Mammary epithelial cell (primary cell): ENCODE measurements at regions of chr6 and their contacts with region 1.

Region 1: GRCh38 chr6:157667211-157668008 is 155.6 kb upstream of the SNX9 start:
- DNase-seq: peak; percentile 32
- H3K4me3 ChIP-seq: no peak overlapping the region
- H3K27ac ChIP-seq: no peak overlapping the region
- H3K4me1 ChIP-seq: peaks cover 8% of the 10 kb centered on the region
- H3K27me3 ChIP-seq: no peaks in the 10 kb centered on the region
- CTCF ChIP-seq: peak; percentile 76 to 94

Region 2: DNA sequence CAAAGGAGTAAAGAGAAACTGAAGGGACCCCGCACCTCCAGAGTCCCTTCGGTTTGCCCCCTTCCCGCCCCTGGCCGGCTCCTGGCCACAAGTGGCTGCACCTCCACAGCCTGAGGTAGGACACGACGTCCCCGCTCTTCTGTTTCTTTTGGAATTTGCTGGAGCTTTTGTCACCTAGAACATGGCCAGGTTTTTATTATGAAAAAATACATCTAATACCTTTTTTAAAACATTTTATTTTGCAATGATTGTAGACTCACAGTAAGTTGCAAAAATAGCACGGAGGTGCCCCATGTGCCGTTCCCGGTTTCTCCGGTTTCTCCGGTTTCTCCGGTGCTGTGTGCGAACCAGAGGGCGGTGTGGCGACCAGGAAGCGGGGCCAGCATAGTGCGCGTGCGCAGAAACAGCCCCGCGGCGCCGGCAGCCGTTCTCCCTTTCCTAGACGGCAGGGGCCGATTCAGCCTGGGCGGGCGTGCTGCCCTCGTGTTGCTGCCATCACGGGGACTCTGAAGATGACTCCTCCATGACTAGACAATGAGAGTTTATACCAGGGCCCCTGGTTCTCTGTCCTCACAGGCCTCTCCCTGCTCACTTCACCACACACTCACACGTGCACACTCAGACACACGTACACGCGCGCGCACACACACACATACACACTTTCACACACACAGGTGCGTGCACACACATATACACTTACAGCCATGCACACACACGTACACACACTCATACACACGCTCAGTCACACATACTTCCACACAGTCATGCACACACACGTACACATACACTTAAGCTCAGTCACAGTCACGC is 446.2 kb before region 1 on chr6:
- CTCF ChIA-PET with region 1: no interaction called
- dilution Hi-C with region 1: no loop called
- in situ Hi-C with region 1: no loop called
- intact Hi-C with region 1: loop called (anchors 10 kb)
- DNase-seq: peak; percentile 73
- H3K4me3 ChIP-seq: peak overlapping the region; percentile 33 to 50 (median 35)
- H3K27ac ChIP-seq: no peak overlapping the region
- H3K4me1 ChIP-seq: peaks cover 16% of the 10 kb centered on the region
- H3K27me3 ChIP-seq: no peaks in the 10 kb centered on the region
- CTCF ChIP-seq: peak in 1 of 2 donors; percentile 34

Region 3: GRCh38 chr6:157379656-157380454 is 287.6 kb before region 1 on chr6:
- CTCF ChIA-PET with region 1: no interaction called
- dilution Hi-C with region 1: no loop called
- in situ Hi-C with region 1: no loop called
- intact Hi-C with region 1: loop called (anchors 5 kb)
- DNase-seq: peak; percentile 84
- H3K4me3 ChIP-seq: peak overlapping the region; percentile 91 to 96 (median 92)
- H3K27ac ChIP-seq: peak overlapping the region; percentile 41
- H3K4me1 ChIP-seq: peaks cover 8% of the 10 kb centered on the region
- H3K27me3 ChIP-seq: no peaks in the 10 kb centered on the region
- CTCF ChIP-seq: no peak

Region 4: DNA sequence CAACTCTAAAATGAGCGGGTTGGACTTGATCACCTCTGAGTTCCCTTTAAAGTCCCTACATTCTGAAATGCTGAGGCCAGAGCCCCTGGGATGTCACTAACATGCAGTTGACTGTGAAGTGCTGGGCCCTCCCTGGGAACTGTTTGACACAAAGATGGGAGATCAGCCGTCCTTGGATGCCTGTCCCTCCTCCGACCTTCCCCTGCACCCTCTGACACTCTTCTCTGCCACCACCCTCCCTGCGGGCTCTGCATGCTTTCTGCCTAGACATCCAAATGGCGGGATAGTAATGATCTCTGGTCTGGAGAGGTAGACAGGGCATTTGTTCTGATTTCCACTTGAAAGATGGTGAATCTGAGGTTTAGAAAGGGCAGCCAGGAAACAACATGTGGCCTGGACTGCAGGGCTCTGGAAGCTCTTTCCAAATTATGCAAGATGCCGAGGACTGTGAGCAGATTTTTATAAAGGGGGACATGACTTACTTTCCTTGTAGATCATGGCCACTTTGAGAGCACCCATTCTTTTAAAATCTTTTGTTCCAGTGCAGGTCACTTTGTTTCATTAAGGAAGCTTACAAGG is 173.2 kb before region 1 on chr6:
- CTCF ChIA-PET with region 1: no interaction called
- dilution Hi-C with region 1: loop called (anchors 10 kb)
- in situ Hi-C with region 1: no loop called
- intact Hi-C with region 1: no loop called
- DNase-seq: no peak
- H3K4me3 ChIP-seq: no peak overlapping the region
- H3K27ac ChIP-seq: no peak overlapping the region
- H3K4me1 ChIP-seq: no peaks in the 10 kb centered on the region
- H3K27me3 ChIP-seq: peaks cover 3% of the 10 kb centered on the region
- CTCF ChIP-seq: no peak

Region 5: GRCh38 chr6:157585274-157586087 is 81.9 kb before region 1 on chr6:
- CTCF ChIA-PET with region 1: no interaction called
- dilution Hi-C with region 1: no loop called
- in situ Hi-C with region 1: no loop called
- intact Hi-C with region 1: no loop called
- DNase-seq: no peak
- H3K4me3 ChIP-seq: no peak overlapping the region
- H3K27ac ChIP-seq: no peak overlapping the region
- H3K4me1 ChIP-seq: no peaks in the 10 kb centered on the region
- H3K27me3 ChIP-seq: peaks cover 2% of the 10 kb centered on the region
- CTCF ChIP-seq: no peak

Region 6: DNA sequence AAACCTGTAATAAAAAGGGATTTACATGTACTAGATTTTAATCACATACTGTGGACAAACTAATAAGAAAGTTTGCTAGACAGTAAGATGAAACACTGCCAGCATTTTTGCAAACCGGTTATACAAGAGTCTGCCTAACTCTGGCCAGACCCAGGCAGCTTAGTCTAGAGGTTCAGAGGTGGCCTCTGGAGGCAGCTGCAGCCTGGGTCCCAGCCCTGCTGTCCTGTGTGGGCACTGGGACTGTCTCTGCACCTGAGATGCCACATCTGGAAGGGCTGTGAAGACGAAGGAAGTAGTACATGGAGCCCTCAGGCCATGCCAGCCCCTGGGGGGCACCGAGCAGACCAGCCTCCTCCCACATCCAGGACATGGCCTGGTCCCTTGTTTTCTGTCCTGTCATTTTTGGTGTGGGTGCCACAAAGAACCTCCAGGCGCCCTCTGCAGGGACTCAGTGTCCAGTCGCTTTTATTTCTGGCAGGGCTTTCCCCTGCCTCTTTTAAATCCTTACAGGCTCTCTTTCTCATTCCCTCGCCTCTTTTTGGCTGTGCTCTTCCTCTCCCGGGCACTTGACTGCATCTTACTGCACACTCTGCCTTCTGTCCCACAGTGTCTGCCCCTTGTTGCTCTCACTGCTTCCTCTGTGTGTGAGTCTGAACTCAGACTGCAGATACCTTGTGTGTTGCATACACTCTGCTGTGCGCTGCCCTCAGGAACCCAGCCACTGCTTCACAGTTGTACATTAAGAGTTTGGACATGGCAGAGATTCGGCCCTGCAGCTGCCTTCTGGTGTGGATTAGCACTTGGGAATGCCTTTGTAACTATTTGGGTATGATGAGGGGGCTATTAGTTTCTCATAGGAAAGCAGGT is 69.7 kb before region 1 on chr6:
- CTCF ChIA-PET with region 1: no interaction called
- dilution Hi-C with region 1: no loop called
- in situ Hi-C with region 1: no loop called
- intact Hi-C with region 1: loop called (anchors 5 kb)
- DNase-seq: peak; percentile 24
- H3K4me3 ChIP-seq: no peak overlapping the region
- H3K27ac ChIP-seq: no peak overlapping the region
- H3K4me1 ChIP-seq: no peaks in the 10 kb centered on the region
- H3K27me3 ChIP-seq: no peaks in the 10 kb centered on the region
- CTCF ChIP-seq: peak; percentile 29 to 66

Region 7: DNA sequence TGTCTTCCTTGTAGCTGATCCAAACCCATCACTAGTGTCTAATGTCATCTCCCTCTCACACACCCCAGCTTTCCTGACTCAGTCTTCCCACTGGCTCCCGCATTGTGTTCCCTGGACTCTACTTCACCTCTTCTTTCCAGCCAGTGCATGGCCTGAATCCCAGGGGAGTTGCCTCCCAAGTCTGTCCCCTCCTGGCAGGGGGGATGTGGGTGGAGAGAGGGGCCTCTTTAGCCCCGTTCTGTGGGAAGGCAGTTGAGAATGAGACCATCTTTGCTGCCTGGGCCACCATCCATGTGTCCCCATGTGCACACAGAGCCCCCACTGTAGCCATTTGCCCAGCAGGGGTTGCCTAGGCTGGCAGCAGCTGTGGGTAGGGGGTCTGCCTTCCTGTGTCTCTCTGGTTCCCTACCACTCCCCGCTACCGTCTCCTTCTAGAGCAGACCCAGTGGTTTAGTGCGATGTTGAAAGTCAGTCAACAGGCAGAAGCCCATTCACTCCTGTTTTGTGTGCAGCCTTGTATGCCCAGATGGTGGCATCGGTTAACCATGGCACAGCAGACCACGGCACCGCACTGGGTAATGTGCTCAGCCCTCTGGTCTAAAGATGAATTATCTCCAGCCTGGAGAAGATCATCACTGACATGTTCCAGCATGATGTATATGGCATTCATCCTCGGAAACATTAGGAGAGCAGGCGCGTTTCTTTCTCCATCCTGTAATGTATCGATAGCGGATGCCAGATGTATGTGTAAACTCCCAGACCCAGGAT is 23.2 kb before region 1 on chr6:
- CTCF ChIA-PET with region 1: no interaction called
- dilution Hi-C with region 1: no loop called
- in situ Hi-C with region 1: no loop called
- intact Hi-C with region 1: loop called (anchors 2 kb)
- DNase-seq: peak; percentile 39
- H3K4me3 ChIP-seq: no peak overlapping the region
- H3K27ac ChIP-seq: no peak overlapping the region
- H3K4me1 ChIP-seq: peaks cover 13% of the 10 kb centered on the region
- H3K27me3 ChIP-seq: no peaks in the 10 kb centered on the region
- CTCF ChIP-seq: peak; percentile 51 to 59